ENCODE measurements at regions of chr22 and their contacts with region 1.

Region 1: DNA sequence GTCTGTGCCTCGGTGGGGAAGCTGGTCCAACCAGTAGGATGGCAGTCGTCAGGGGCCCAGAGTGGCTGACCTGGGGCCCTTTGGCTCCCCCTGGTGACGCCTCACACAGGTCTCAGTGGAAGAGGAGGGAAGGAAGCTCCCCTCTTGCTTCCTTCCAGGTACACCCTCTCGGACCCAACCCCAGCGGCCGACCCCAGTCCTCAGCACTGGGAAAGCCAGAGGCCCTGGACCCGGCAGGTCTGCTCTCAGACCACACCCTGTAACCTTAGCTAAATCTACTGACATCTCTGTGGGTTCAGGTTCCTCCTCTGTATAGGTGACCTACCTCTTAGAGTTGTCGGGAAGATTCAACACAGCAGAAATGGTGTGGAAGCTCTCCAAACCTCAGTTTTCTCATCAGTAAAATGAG is 3.4 kb upstream of the SCUBE1 start:
- DNase-seq: peak; percentile 65 to 67
- H3K4me3 ChIP-seq: no peak overlapping the region
- H3K27ac ChIP-seq: no peak overlapping the region
- H3K4me1 ChIP-seq: peaks cover 3 to 18% of the 10 kb centered on the region in 2 donors
- H3K27me3 ChIP-seq: peaks cover 8% of the 10 kb centered on the region
- CTCF ChIP-seq: peak; percentile 24 to 77 (median 52)
- POLR2A ChIP-seq: no peak

Region 2: GRCh38 chr22:43230971-43231723 is 115.4 kb before region 1 on chr22:
- intact Hi-C with region 1: loop called (anchors 5 kb)
- DNase-seq: peak; percentile 56 to 65
- H3K4me3 ChIP-seq: no peak overlapping the region
- H3K27ac ChIP-seq: no peak overlapping the region
- H3K4me1 ChIP-seq: peaks cover 9 to 10% of the 10 kb centered on the region in 2 donors
- H3K27me3 ChIP-seq: no peaks in the 10 kb centered on the region
- CTCF ChIP-seq: peak; percentile 75 to 95 (median 82)
- POLR2A ChIP-seq: no peak

Region 3: GRCh38 chr22:43273902-43274484 is 72.5 kb before region 1 on chr22:
- intact Hi-C with region 1: loop called (anchors 5 kb)
- DNase-seq: peak; percentile 32 to 50
- H3K4me3 ChIP-seq: no peak overlapping the region
- H3K27ac ChIP-seq: no peak overlapping the region
- H3K4me1 ChIP-seq: no peaks in the 10 kb centered on the region
- H3K27me3 ChIP-seq: no peaks in the 10 kb centered on the region
- CTCF ChIP-seq: peak in 5 of 6 experiments; percentile 30 to 88 (median 87)
- POLR2A ChIP-seq: no peak